ENCODE measurements at regions of chr17 and their contacts with region 1.

Region 1: GRCh38 chr17:35587074-35587971 is at the start of gene AP2B1:
- DNase-seq: peak; percentile 96 to 97
- H3K4me3 ChIP-seq: peak within 1 kb of the TSS; percentile 77
- H3K4me3 Mint-ChIP-seq: peak within 1 kb of the TSS; percentile 90
- H3K27ac Mint-ChIP-seq: peak within 1 kb of the TSS; percentile 96
- H3K4me1 ChIP-seq: peaks cover 21% of the 10 kb centered on the region
- H3K4me1 Mint-ChIP-seq: peaks cover 13% of the 10 kb centered on the region
- H3K27me3 ChIP-seq: no peaks in the 10 kb centered on the region
- H3K27me3 Mint-ChIP-seq: no peaks in the 10 kb centered on the region
- CTCF ChIP-seq: no peak
- total RNA-seq, gene AP2B1: 221 and 228 TPM in 2 replicates

Region 2: DNA sequence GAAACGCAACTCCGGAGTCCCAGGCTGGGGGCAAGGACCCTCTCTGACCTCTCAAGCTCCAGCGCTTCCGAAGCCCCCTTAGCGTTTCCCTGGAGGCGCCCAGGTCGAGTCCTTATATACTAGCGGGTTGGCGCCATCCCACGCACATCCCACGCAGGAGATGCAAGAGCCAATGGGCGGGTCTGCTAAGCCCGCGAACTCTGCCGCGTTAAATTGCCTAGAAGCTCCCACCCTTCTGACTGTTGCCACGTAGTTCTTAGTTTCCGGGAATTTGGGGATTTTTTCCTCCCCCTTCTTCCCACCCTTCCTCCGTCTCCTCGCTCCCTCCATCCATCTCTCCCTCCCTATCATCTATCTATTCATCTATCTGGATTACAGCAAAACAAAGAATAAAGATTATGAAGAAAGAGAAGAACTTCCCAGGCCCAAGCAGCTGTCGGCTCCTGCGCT is 213.8 kb before region 1 on chr17 and contains the start of gene SLFN11:
- CTCF ChIA-PET with region 1: no interaction called
- POLR2A ChIA-PET with region 1: interaction called, 12 read pairs
- intact Hi-C with region 1: no loop called
- DNase-seq: no peak
- H3K4me3 ChIP-seq: peak within 1 kb of the TSS; percentile 23
- H3K4me3 Mint-ChIP-seq: peak within 1 kb of the TSS; percentile 64
- H3K27ac Mint-ChIP-seq: no peak within 1 kb of the TSS
- H3K4me1 ChIP-seq: 0 out of 2 replicates have a peak, but pooled peaks cover 8% of the 10 kb centered on the region
- H3K4me1 Mint-ChIP-seq: peaks cover 14% of the 10 kb centered on the region
- H3K27me3 ChIP-seq: peaks cover 3% of the 10 kb centered on the region; the same call in 1 of the 2 replicates
- H3K27me3 Mint-ChIP-seq: peaks cover 32% of the 10 kb centered on the region
- CTCF ChIP-seq: no peak
- total RNA-seq, gene SLFN11: not detected in 2 replicates

Region 3: DNA sequence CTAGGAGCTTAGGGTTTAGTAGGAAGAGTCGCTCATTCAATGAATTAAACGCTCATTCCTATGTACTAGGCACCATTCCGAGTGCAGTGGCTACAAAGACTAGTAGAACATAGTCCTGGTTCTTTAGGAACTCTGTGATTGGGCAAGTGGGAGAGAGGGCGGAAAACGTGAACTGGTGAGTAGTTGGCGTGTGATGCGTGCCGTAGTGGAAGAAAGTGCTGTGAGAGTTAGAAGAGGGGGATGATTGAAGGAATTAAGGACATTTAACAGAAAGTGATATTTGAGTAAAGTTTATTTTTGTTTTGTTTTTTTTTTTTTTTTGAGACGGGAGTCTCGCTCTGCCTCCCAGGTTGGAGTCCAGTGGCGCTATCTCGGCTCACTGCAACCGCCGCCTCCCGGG is 18.8 kb before region 1 on chr17:
- CTCF ChIA-PET with region 1: no interaction called
- POLR2A ChIA-PET with region 1: interaction called, 6 read pairs
- intact Hi-C with region 1: loop called (anchors 1 kb)
- DNase-seq: peak in 1 of 2 experiments; percentile 32
- H3K4me3 ChIP-seq: peak overlapping the region; percentile 54
- H3K4me3 Mint-ChIP-seq: peak overlapping the region; percentile 75
- H3K27ac Mint-ChIP-seq: peak overlapping the region; percentile 56
- H3K4me1 ChIP-seq: peaks cover 4% of the 10 kb centered on the region
- H3K4me1 Mint-ChIP-seq: peaks cover 15% of the 10 kb centered on the region
- H3K27me3 ChIP-seq: no peaks in the 10 kb centered on the region
- H3K27me3 Mint-ChIP-seq: peaks cover 2% of the 10 kb centered on the region
- CTCF ChIP-seq: no peak

Region 4: DNA sequence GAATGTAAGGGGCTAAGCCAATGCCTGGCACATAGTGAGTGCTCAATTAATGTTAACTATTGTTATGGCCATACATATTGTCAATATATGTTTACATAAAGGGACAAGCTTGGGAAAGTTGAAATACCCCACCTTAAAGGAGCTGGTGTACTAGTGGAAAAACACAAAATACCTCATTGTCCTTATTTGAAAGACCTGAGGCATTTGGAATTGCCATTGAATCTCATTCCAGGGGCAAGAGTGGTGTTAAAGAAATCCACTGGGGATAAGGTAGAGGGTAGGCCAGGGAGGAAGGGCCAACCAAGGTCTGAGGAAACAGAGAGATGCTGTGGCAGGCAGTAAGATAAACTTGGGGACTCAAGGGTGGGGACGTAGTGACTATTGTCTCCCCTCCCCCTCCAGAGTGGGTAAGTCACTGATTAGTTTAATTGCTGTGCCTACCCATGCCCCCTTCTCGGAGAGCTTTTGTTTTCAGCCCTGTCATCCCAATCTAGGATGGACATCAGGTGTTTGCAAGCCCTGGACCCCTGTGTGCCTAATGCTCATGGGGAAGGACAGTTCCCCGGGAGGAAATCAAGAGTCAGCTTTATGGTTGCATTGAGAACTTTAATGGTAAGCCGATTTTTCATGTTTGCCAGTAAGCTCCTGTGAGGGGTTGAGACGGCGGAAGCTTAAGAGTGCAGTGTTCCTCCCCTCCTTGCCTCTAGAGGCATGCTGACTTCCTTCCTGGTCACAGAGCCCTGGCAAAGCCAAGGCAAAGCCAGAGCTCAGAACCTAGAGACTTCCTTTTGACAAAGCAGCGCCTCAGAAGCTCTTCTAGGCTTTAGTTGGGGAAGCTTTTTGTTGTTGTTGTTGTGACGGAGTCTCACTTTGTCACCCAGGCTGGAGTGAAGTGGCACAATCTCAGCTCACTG is 283.8 kb after region 1 on chr17:
- CTCF ChIA-PET with region 1: no interaction called
- POLR2A ChIA-PET with region 1: no interaction called
- intact Hi-C with region 1: no loop called
- DNase-seq: no peak
- H3K4me3 ChIP-seq: no peak overlapping the region
- H3K4me3 Mint-ChIP-seq: no peak overlapping the region
- H3K27ac Mint-ChIP-seq: no peak overlapping the region
- H3K4me1 ChIP-seq: peaks cover 10% of the 10 kb centered on the region
- H3K4me1 Mint-ChIP-seq: peaks cover 6% of the 10 kb centered on the region
- H3K27me3 ChIP-seq: no peaks in the 10 kb centered on the region
- H3K27me3 Mint-ChIP-seq: no peaks in the 10 kb centered on the region
- CTCF ChIP-seq: no peak